ENCODE measurements at regions of chr21 and their contacts with region 1.

Region 1: DNA sequence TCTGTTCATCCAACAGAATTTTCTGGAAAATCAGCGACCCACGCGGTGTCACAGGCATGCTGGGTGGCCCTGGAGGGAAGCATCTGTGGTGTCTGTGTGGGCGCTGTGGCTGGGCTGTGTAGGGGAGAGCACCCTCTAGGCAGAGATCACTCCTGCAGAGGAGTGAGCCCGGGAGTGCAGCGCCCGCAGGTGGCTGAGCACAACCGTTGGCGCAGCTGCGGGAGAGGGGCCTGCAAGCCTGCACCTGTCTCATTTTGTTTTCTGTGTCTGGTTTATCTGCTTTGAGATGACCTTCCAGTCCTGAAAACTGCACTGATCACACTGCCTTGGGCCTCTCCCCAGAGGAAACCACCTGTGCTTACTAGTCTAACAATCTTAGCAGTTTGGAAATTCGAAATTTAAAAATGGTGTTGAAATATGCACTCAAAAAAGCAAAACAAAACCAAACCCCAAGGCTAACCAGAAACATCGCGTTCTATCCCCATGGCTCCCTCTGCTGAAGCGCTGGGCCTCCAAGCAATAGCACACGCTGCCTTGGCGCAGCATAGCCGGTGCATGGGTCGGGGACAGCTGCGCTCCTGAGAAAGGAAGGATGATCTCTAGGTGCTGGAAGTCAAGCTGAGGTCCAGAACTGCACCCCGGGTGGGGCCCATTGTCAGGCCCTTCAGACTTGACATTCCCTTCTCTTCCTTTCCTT is 4.8 kb downstream of the FAM3B start:
- DNase-seq: peak; percentile 95
- H3K4me3 ChIP-seq: peak overlapping the region; percentile 17
- H3K27ac ChIP-seq: peak overlapping the region; percentile 96
- H3K4me1 ChIP-seq: peaks cover 47% of the 10 kb centered on the region
- CTCF ChIP-seq: peak; percentile 73

Region 2: DNA sequence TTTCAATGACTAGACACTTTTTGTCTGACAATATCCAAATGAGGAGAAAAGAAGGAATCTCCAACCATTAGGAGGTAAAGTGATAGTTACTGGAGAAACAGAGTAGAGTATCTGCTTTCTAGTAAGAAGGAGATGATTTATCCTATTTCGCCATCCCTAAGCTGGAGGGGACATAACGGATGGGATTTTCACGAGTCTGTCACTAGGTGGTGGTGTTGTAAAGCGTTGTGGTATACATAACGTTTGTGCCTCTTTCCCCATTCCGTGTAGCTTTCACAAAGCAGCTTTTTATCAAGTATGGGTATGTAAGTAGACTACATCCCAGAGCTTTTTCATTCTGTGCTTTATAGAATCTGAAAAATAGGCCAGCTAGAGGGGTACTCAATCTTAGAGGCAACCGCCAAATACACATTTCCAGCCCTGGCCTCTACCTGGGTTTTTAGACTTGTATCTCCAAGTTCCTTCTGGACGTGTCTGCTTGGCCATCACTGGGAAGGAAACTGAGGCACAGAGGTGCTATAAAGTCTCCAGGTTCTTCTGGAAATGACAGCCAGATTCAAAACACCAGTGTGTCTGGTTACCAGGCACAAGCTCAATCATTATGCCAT is 38.0 kb before region 1 on chr21:
- CTCF ChIA-PET with region 1: interaction called, 3 read pairs
- POLR2A ChIA-PET with region 1: interaction called, 3 read pairs
- intact Hi-C with region 1: loop called (anchors 2 kb)
- DNase-seq: peak; percentile 85
- H3K4me3 ChIP-seq: no peak overlapping the region
- H3K27ac ChIP-seq: no peak overlapping the region
- H3K4me1 ChIP-seq: peaks cover 8% of the 10 kb centered on the region
- CTCF ChIP-seq: peak; percentile 90

Region 3: GRCh38 chr21:41369105-41369919 is 48.0 kb after region 1 on chr21:
- CTCF ChIA-PET with region 1: interaction called, 5 read pairs
- POLR2A ChIA-PET with region 1: interaction called, 17 read pairs
- intact Hi-C with region 1: loop called (anchors 1 kb)
- DNase-seq: peak; percentile 71
- H3K4me3 ChIP-seq: peak overlapping the region; percentile 59
- H3K27ac ChIP-seq: peak overlapping the region; percentile 93
- H3K4me1 ChIP-seq: peaks cover 46% of the 10 kb centered on the region
- CTCF ChIP-seq: 0 out of 2 replicates have a peak, but pooled peaks have one; percentile 45

Region 4: DNA sequence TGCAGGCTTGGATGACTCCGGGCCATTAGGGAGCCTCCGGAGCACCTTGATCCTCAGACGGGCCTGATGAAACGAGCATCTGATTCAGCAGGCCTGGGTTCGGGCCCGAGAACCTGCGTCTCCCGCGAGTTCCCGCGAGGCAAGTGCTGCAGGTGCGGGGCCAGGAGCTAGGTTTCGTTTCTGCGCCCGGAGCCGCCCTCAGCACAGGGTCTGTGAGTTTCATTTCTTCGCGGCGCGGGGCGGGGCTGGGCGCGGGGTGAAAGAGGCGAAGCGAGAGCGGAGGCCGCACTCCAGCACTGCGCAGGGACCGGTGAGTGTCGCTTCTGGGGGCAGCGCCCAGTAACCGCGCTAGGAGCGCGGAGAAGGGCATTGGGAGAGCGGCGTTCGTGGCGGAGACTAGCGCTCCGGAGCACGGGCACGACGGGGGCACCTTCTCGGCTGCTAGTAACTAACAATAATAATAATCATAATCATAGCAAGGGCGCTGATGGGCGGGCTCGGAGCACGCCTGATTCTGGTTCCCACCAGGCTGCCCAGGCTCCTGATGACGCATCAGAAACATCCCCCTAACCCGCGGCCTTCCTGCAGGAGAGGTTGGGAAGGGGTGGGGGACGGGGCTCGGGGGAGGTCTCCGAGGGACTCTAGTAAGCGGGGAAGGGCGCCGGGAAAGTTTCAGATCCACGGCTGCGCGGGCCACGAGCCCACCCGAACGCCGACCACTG is 104.8 kb after region 1 on chr21 and contains the start of gene MX1:
- CTCF ChIA-PET with region 1: no interaction called
- POLR2A ChIA-PET with region 1: interaction called, 3 read pairs
- intact Hi-C with region 1: loop called (anchors 5 kb)
- DNase-seq: peak; percentile 78
- H3K4me3 ChIP-seq: peak within 1 kb of the TSS; percentile 67
- H3K27ac ChIP-seq: no peak within 1 kb of the TSS
- H3K4me1 ChIP-seq: peaks cover 65% of the 10 kb centered on the region
- CTCF ChIP-seq: no peak
- total RNA-seq, gene MX1: 24.4 and 24.7 TPM in 2 replicates

Region 5: DNA sequence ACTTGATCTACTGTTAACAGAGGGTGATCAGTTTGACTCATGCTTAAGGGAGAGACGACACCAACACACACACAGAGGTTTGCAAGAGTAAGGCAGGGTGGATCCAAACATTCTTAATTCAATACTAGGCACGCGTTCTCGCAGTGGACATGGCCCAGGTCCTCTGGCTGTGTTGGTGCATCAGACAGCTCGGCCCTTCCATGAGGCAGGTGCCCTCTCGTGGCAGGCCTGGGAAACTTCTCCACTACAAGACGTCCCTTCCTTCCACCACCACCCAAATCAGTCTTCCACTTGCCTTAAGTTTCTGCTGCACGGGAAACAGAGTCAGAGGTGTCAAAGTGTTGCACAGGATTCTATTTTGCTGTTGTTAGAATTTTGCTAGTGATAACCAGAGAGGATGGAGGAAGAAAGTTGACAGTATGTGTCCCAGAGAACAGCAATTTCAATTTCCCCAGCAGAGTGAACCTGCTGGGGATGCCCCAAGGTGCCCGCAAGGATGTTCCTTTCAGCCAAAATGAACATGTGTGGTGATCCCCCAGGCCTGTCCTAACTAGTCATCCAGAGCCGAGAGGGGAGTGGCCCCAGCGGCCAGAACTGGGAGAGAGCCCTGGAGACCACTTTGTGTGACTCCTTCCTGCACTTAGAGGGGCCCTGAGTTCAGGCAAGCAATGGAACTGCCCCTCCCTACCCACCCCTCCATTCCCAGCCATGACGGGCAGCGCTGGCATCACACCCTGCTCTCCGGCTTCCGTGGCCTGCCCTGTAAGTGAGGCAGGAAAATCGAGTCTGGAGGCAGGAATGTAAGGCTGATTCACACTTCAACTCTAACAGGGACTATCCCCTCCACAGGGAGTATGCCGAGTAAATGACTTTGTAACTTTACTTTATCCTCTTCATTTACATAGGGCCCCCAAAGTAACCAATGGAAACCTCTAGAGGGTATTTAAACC is 139.5 kb after region 1 on chr21:
- CTCF ChIA-PET with region 1: interaction called, 3 read pairs
- POLR2A ChIA-PET with region 1: no interaction called
- intact Hi-C with region 1: loop called (anchors 1 kb)
- DNase-seq: peak; percentile 67
- H3K4me3 ChIP-seq: no peak overlapping the region
- H3K27ac ChIP-seq: no peak overlapping the region
- H3K4me1 ChIP-seq: no peaks in the 10 kb centered on the region
- CTCF ChIP-seq: peak; percentile 82